ENCODE measurements at regions of chr6 and their contacts with region 1.

Region 1: GRCh38 chr6:160992061-160992979 is 751 bp downstream of the MAP3K4 start:
- DNase-seq: peak; percentile 78
- H3K4me3 ChIP-seq: peak overlapping the region; percentile 80 to 88 (median 80)
- H3K27ac ChIP-seq: peak overlapping the region; percentile 49
- H3K4me1 ChIP-seq: peaks cover 14% of the 10 kb centered on the region
- H3K27me3 ChIP-seq: no peaks in the 10 kb centered on the region
- CTCF ChIP-seq: peak; percentile 43 to 66
- POLR2A ChIP-seq: no peak

Region 2: GRCh38 chr6:161011492-161012480 is 19.5 kb after region 1 on chr6:
- CTCF ChIA-PET with region 1: interaction called, 21 read pairs
- POLR2A ChIA-PET with region 1: interaction called, 3 read pairs
- dilution Hi-C with region 1: no loop called
- intact Hi-C with region 1: loop called (anchors 2 kb)
- DNase-seq: peak; percentile 73
- H3K4me3 ChIP-seq: no peak overlapping the region
- H3K27ac ChIP-seq: no peak overlapping the region
- H3K4me1 ChIP-seq: peaks cover 8% of the 10 kb centered on the region
- H3K27me3 ChIP-seq: no peaks in the 10 kb centered on the region
- CTCF ChIP-seq: no peak
- POLR2A ChIP-seq: no peak

Region 3: DNA sequence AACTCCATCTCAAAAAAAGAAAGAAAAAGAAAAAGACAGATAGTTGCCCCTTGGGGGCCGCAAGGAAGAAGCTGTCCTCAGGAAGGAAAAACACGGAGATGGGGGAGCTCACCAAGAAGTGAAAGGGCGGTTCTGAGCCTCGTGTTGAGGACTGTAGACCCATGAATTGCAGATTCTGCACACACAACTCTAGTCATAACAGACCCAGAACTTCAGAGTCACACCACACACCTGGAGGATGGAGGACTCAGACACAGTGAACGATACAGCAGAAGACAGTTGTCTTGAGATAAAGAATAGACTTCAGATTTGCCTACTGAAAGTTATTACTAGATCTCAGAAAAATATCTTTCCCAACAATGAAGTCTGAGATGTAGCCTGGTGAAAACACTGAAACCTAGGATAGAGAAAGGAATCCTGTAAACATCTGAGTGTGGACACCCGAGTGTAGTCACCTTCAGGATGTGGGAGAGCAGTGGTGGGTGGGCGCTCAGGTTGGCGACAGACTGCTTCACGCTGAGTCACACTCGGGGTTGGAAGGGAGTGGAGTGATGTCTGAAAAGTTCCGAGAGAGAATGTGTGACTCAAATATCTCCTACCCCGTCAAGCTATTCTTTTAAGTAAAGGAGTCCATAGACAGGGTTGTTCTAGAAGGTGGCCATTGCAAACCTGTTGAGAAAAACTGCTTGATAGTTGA is 87.4 kb after region 1 on chr6:
- CTCF ChIA-PET with region 1: no interaction called
- POLR2A ChIA-PET with region 1: no interaction called
- dilution Hi-C with region 1: no loop called
- intact Hi-C with region 1: no loop called
- DNase-seq: no peak
- H3K4me3 ChIP-seq: no peak overlapping the region
- H3K27ac ChIP-seq: no peak overlapping the region
- H3K4me1 ChIP-seq: no peaks in the 10 kb centered on the region
- H3K27me3 ChIP-seq: no peaks in the 10 kb centered on the region
- CTCF ChIP-seq: no peak
- POLR2A ChIP-seq: no peak

Measured in endothelial cell of umbilical vein (primary cell).